ENCODE measurements at regions of chr18 and their contacts with region 1.

Region 1: DNA sequence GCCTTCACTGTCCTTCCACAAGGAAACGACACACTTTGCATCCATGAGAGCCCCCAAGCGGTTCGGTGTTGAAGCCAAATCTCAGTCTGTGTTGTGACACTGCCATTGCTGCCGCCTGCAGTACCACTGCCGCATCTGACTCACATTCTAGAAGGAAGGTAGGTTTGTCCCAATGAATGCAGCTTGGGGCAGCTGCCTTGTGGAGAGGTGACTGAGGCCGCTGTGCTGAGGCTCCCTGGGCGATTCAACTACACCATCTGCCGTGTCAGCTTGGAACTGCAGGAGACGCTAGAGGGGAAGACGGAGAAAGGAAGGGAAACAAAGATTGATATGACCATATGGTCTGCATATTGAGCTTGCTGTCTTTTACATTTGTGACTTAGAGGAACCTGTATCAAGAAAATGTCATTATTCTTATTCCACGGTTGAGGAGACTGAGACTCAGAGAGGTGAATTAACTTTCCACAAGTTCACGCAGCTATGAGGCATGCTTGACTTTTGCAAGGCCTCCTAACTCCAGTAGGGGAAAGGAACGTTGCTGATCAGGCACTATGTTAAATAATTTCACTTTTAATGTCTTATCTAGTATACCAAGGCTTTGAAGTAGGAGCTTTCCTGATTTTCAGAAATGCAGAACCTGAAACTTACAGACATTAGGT is 43.5 kb upstream of the LMAN1 start:
- DNase-seq: peak; percentile 52 to 79 (median 78)
- ATAC-seq: peak; percentile 96
- H3K4me3 ChIP-seq: no peak overlapping the region
- H3K4me1 ChIP-seq: no peaks in the 10 kb centered on the region
- CTCF ChIP-seq: peak; percentile 82

Region 2: DNA sequence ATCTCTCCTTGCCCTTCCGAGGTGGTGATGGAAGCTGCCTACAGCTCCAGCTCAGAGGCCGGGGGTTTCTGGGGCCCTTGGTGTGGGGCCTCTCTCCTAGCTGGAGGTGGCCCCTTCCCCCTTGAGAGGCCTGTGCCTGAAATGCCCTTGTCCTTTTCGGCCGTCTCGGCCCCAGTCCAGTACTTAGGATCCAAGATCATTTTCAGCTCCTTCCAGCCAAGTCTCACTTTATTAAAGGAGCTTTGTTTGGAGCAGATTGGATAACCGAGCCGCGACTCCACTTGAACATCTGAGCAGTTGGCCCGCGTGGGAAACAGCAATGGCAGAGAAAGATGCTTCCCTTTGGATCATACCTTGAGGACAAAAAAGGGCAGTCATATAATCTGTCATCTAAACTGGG is 1233.6 kb before region 1 on chr18:
- intact Hi-C with region 1: no loop called
- DNase-seq: no peak
- ATAC-seq: no peak
- H3K4me3 ChIP-seq: no peak overlapping the region
- H3K4me1 ChIP-seq: no peaks in the 10 kb centered on the region
- CTCF ChIP-seq: no peak

Region 3: GRCh38 chr18:59249205-59249774 is 153.3 kb before region 1 on chr18:
- intact Hi-C with region 1: loop called in 1 of 2 experiments (anchors 5 kb)
- DNase-seq: peak in 1 of 3 donors; percentile 58
- ATAC-seq: peak; percentile 31
- H3K4me3 ChIP-seq: no peak overlapping the region
- H3K4me1 ChIP-seq: no peaks in the 10 kb centered on the region
- CTCF ChIP-seq: peak; percentile 19

Region 4: DNA sequence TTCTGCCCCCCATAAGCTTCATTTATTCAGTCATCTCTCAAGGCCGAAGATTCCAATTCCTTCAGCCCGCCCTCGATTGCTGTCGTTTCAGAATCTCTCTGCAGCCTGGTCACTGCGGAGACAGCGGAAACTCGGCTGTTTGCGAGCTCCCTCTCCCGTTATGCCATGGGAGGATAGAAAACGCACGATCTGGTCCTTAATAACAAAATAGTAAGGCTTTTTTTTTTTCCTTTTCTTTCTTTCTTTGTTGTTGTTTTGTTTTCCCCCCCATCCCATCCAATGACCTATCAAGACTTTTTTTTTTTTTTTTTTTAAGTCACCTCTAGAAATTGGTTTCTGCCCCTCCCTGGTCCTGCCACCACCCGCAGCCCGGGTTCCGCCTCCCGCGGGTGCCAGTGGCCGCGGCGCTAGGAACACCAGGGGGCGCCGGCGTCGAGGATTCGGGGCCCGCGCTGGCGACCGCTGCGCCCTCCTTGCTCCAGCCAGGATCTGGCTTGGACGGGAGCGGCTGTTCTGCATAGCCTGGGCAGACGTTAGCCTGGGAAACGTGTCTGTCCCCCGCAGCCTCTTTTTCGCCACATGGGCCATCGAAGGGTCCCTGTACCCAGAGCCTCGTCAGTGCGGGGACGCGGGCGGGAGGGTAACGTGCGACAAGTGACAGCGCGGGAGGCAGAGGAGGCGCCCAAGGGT is 94.2 kb before region 1 on chr18:
- intact Hi-C with region 1: loop called in 1 of 2 experiments (anchors 5 kb)
- DNase-seq: peak; percentile 59 to 85 (median 83)
- ATAC-seq: peak; percentile 95
- H3K4me3 ChIP-seq: no peak overlapping the region
- H3K4me1 ChIP-seq: no peaks in the 10 kb centered on the region
- CTCF ChIP-seq: peak; percentile 70

Measured in mucosa of descending colon (tissue), 3 donors.